Mammary epithelial cell (primary cell): ENCODE measurements at regions of chr5 and their contacts with region 1.

Region 1: DNA sequence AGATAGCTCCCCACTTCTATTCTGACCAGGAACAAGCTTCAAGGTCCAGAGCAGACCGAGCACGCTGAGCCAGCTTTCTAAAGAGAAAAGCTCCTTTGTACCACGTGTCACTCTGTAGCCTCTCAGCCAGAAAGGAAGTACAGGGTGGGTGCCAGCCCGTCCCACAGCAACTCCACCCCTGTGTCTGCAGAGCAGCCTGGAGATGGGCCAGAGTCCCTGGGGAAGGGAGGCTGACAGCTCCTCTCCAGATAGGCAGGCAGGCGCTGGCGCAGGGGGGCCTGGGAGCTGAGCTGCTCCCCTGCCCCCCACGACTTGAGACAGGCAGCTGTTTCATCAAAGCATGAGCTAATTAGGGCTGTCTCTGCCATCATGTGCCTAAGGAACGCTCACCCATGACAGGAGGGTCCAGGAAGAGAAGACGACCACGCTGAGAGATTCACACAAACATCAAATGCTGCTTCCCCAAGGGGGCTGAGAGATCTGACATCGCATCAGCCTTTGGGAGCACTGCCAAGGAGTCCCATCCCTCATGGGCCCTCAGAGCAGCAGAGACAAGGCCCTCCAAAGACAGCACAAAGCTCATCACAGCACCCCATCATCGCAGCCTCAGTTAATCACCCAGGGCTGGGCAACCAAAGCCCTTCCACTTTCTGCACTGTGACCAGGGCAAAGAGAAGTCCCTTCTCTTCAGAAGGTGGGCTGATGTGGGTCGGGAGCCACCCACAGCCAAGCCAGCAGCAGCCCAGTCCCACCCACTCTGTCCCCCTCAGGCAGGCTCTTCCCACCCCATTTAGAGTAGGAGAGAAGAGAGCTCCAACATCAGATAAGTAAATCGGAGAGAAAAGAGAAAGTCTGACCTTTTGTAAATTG is 78.5 kb upstream of the LRRTM2 start:
- DNase-seq: no peak
- H3K4me3 ChIP-seq: no peak overlapping the region
- H3K27ac ChIP-seq: no peak overlapping the region
- H3K4me1 ChIP-seq: peaks cover 3% of the 10 kb centered on the region
- H3K27me3 ChIP-seq: no peaks in the 10 kb centered on the region
- CTCF ChIP-seq: no peak

Region 2: GRCh38 chr5:138889994-138890393 is 63.6 kb before region 1 on chr5:
- CTCF ChIA-PET with region 1: no interaction called
- dilution Hi-C with region 1: loop called (anchors 5 kb)
- in situ Hi-C with region 1: no loop called
- intact Hi-C with region 1: no loop called
- DNase-seq: no peak
- H3K4me3 ChIP-seq: no peak overlapping the region
- H3K27ac ChIP-seq: no peak overlapping the region
- H3K4me1 ChIP-seq: no peaks in the 10 kb centered on the region
- H3K27me3 ChIP-seq: no peaks in the 10 kb centered on the region
- CTCF ChIP-seq: no peak